ENCODE measurements at regions of chr6 and their contacts with region 1.

Region 1: DNA sequence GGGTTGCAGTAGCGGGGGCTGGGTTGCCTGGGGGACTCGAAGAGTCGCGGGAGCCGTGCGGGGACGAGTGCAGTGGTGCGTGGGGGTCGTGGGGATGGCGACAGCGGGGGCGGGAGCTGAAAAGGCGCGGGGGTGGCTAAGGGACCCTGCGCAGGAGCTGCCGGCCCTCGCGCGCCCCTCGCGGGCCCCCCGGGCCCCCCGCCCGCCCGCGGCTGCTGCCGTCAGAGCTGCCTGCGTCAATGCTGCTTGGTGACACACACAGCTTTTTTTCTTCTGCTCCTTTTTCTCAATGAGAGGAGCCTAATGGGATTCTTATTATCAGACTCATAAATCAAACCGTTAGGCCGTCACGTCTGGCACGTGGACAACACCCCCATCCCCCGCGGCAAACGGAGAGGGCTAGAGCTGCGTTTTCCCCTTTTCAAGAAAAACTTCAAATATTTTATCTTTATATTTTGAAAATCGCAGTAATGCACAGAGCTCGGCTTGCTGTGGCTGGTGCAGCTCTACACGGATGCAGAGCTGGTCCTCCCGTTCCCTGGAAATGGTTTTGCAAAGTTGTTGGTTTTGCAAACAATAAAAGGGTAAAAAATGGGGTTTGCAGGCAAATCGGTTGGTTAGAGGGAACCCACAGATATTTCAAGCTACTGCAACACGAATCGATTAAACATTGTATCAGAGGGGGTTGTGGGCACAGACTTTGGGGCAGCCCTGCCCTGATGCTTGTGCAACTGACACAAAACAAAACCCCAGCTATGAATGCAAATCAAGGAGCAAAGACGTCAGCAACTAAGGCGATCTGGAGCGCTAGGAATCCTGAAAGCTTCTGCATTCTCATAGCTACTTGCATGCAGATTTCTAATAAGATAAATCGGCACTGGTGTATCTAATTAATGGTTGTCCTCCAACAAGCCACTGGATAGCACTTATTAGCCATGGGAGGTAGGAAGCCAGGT is 161.4 kb downstream of the TBXT start:
- DNase-seq: peak; percentile 67 to 93
- ATAC-seq: peak; percentile 33 to 43
- H3K4me3 ChIP-seq: peak overlapping the region; percentile 29
- H3K27ac ChIP-seq: peak overlapping the region; percentile 99
- H3K4me1 ChIP-seq: peaks cover 49% of the 10 kb centered on the region
- CTCF ChIP-seq: no peak
- EP300 ChIP-seq: peak; percentile 98 to 99
- POLR2A ChIP-seq: no peak
- RAD21 ChIP-seq: peak; percentile 15 to 45; a peak in 4 of 5 replicates

Region 2: GRCh38 chr6:165969184-165969583 is 37.0 kb before region 1 on chr6:
- CTCF ChIA-PET with region 1: interaction called, 4 read pairs
- POLR2A ChIA-PET with region 1: interaction called, 20 read pairs
- DNase-seq: peak in 1 of 2 experiments; percentile 54
- ATAC-seq: peak; percentile 42 to 60; a peak in 5 of 6 replicates
- H3K4me3 ChIP-seq: no peak overlapping the region; the same call in 2 of the 3 replicates
- H3K27ac ChIP-seq: peak overlapping the region in 1 of 2 experiments; percentile 22; a peak in 1 of 6 replicates
- H3K4me1 ChIP-seq: peaks cover 100% of the 10 kb centered on the region
- CTCF ChIP-seq: no peak
- EP300 ChIP-seq: no peak
- POLR2A ChIP-seq: no peak
- RAD21 ChIP-seq: no peak

Region 3: DNA sequence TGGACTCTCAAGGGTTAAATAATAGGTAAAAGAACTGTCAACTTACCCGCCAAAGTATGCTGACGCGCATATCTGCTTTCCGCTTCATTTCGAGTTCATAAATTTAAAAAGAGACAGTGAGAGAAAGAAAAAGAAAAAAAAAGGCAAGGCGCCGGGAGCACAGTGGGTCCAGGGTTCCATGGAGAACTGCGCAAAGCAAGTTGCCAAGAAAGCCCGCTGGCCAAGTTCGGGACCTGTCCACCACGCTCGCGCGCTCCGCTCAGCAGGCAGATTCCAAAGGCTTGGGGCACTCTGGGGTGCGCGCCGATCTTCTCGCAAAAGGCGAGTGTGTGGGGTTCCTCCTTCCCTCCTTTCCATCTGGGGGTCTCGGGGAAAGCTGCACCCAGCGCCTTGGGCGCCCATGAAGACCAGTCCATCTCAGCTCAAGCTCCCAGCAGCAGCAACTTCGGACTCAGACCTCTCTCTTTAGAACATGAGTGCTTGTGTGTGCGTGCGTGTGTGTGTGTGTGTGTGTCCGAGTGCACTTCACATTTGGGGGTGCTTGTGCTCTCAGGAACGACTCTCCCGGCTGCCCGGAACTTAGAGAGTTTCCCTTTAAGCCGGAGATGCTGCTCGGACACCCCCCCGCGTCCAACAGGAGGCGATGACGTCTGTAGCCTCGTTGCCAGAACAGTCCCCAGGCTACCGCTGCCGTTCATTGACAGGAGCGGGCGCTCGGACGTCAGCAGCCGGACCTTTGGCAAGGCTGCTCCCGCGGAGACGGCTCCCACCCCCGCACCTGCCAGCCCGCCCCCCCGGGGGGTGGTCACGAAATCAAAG is 18.5 kb before region 1 on chr6:
- CTCF ChIA-PET with region 1: interaction called, 11 read pairs
- POLR2A ChIA-PET with region 1: interaction called, 79 read pairs
- DNase-seq: peak; percentile 89 to 99
- ATAC-seq: peak; percentile 80 to 85
- H3K4me3 ChIP-seq: peak overlapping the region; percentile 89
- H3K27ac ChIP-seq: peak overlapping the region; percentile 95 to 97
- H3K4me1 ChIP-seq: peaks cover 8% of the 10 kb centered on the region
- CTCF ChIP-seq: no peak
- EP300 ChIP-seq: peak; percentile 98 to 100
- POLR2A ChIP-seq: peak; percentile 61
- RAD21 ChIP-seq: peak; percentile 20 to 60; a peak in 4 of 5 replicates

Region 4: GRCh38 chr6:166173281-166173951 is 167.2 kb after region 1 on chr6:
- CTCF ChIA-PET with region 1: no interaction called
- POLR2A ChIA-PET with region 1: no interaction called
- DNase-seq: no peak
- ATAC-seq: peak in 1 of 2 experiments; percentile 60; a peak in 3 of 6 replicates
- H3K4me3 ChIP-seq: no peak overlapping the region
- H3K27ac ChIP-seq: no peak overlapping the region
- H3K4me1 ChIP-seq: no peaks in the 10 kb centered on the region
- CTCF ChIP-seq: no peak
- EP300 ChIP-seq: no peak
- POLR2A ChIP-seq: no peak
- RAD21 ChIP-seq: no peak